Adrenal gland (tissue), 19 donors: ENCODE measurements at regions of chr9 and their contacts with region 1.

Region 1: DNA sequence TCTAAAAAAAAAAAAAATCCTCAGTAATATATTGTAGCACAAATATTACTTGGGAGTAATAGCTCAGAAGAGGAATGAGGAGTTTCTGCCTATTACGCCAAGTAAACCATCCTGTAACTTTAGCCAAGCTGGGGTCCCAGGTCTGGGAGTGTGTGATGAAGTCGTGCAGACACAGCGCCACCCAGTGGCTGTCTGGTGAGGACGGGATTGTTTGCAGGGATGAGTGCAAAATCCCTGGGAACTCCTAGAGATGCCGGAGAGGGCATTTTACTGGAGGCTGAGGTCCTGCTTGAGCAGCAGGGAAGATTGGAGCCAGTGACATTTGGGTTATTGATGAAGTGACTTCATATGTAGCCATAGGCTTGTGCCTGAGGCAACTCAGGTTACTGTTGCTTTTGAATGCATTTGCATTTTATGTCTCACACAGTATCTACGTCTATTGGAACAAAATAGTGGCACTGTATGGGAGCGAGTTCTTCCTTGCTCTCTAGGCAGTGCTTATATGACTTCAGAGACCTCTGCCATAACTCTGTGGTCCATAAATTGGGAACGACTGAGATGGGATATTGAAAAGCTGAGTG is 72.8 kb downstream of the PSAT1 start:
- DNase-seq: peak; percentile 69 to 89 (median 81)
- H3K4me3 ChIP-seq: no peak overlapping the region
- H3K27ac ChIP-seq: no peak overlapping the region
- H3K4me1 ChIP-seq: no peaks in the 10 kb centered on the region
- H3K27me3 ChIP-seq: no peaks in the 10 kb centered on the region
- CTCF ChIP-seq: peak; percentile 62 to 89 (median 82)
- POLR2A ChIP-seq: no peak

Region 2: DNA sequence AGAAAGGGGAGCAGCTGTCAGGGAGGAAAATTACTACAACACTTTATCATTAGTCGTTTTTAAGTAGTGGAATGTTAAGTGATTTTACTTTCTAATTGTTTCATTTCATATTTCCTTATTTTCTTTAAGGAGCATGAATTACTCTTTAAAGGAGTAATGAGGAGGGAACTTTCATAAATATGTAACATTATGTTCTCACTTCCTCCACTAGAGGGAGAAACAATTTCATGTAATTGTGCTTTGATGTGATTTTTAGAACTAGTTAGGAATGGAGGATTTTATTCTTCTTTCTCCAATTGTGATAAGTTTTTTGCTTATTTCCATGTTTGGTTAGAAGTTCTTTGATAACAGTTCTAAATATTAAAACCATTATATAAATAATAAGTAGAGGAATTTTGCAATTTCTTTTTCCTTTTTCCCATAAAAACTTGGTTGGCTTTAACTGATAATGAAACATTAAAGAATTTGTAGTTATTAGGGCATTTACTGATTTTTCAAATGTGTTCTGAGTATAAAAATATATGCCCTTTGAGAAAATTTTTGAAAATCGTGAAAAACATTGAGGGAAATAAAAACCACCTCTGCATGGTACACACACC is 108.2 kb before region 1 on chr9:
- intact Hi-C with region 1: loop called (anchors 2 to 5 kb)
- DNase-seq: no peak
- H3K4me3 ChIP-seq: no peak overlapping the region
- H3K27ac ChIP-seq: no peak overlapping the region
- H3K4me1 ChIP-seq: no peaks in the 10 kb centered on the region
- H3K27me3 ChIP-seq: no peaks in the 10 kb centered on the region
- CTCF ChIP-seq: peak; percentile 59 to 86 (median 69)
- POLR2A ChIP-seq: no peak

Region 3: DNA sequence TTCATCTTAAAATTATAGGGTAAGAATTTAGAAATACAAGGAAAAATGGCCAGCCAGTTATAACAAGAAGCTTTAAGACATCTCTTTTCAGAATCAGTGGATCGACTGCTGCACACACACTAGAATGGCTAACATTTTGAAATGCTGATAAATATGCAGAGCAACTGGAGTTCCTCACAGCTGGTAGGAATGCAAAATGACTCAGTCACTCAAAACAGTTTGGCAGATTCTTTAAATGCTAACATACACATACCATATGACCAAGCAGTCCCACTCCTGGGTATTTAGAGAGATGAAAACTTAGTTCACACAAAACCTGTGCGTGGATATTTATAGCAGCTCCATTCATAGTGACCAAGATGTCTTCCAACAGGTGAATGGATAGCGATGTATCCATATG is 96.0 kb before region 1 on chr9:
- intact Hi-C with region 1: no loop called
- DNase-seq: no peak
- H3K4me3 ChIP-seq: no peak overlapping the region
- H3K27ac ChIP-seq: no peak overlapping the region
- H3K4me1 ChIP-seq: peaks cover 11 to 13% of the 10 kb centered on the region in 2 donors
- H3K27me3 ChIP-seq: no peaks in the 10 kb centered on the region
- CTCF ChIP-seq: no peak
- POLR2A ChIP-seq: no peak

Region 4: GRCh38 chr9:78566948-78567684 is 197.4 kb after region 1 on chr9:
- intact Hi-C with region 1: no loop called
- DNase-seq: no peak
- H3K4me3 ChIP-seq: no peak overlapping the region
- H3K27ac ChIP-seq: no peak overlapping the region
- H3K4me1 ChIP-seq: no peaks in the 10 kb centered on the region
- H3K27me3 ChIP-seq: no peaks in the 10 kb centered on the region
- CTCF ChIP-seq: no peak
- POLR2A ChIP-seq: no peak